ENCODE measurements at regions of chr5 and their contacts with region 1.

Region 1: GRCh38 chr5:131747180-131748105 is 49.4 kb downstream of the FNIP1 start:
- DNase-seq: no peak
- H3K4me3 Mint-ChIP-seq: peak overlapping the region; percentile 49
- H3K27ac Mint-ChIP-seq: peak overlapping the region; percentile 85
- H3K4me1 Mint-ChIP-seq: peaks cover 37% of the 10 kb centered on the region
- H3K27me3 Mint-ChIP-seq: no peaks in the 10 kb centered on the region

Region 2: GRCh38 chr5:131170540-131171275 is 576.7 kb before region 1 on chr5 and contains the start of gene LYRM7:
- CTCF ChIA-PET with region 1: no interaction called
- intact Hi-C with region 1: loop called (anchors 5 kb)
- DNase-seq: peak; percentile 98
- H3K4me3 Mint-ChIP-seq: peak within 1 kb of the TSS; percentile 99
- H3K27ac Mint-ChIP-seq: peak within 1 kb of the TSS; percentile 92
- H3K4me1 Mint-ChIP-seq: peaks cover 44% of the 10 kb centered on the region
- H3K27me3 Mint-ChIP-seq: no peaks in the 10 kb centered on the region
- total RNA-seq, gene LYRM7: 14.6 to 15.0 TPM

Region 3: GRCh38 chr5:131640043-131640856 is 107.2 kb before region 1 on chr5:
- CTCF ChIA-PET with region 1: no interaction called
- intact Hi-C with region 1: loop called (anchors 1 kb)
- DNase-seq: peak; percentile 90
- H3K4me3 Mint-ChIP-seq: peak overlapping the region; percentile 59
- H3K27ac Mint-ChIP-seq: peak overlapping the region; percentile 94
- H3K4me1 Mint-ChIP-seq: peaks cover 29% of the 10 kb centered on the region
- H3K27me3 Mint-ChIP-seq: no peaks in the 10 kb centered on the region

Region 4: GRCh38 chr5:131671994-131672655 is 75.3 kb before region 1 on chr5:
- CTCF ChIA-PET with region 1: no interaction called
- intact Hi-C with region 1: loop called (anchors 5 kb)
- DNase-seq: no peak
- H3K4me3 Mint-ChIP-seq: no peak overlapping the region
- H3K27ac Mint-ChIP-seq: no peak overlapping the region
- H3K4me1 Mint-ChIP-seq: peaks cover 23% of the 10 kb centered on the region
- H3K27me3 Mint-ChIP-seq: no peaks in the 10 kb centered on the region

Region 5: GRCh38 chr5:131854134-131854533 is 106.7 kb after region 1 on chr5:
- CTCF ChIA-PET with region 1: no interaction called
- intact Hi-C with region 1: loop called (anchors 2 kb)
- DNase-seq: peak; percentile 37
- H3K4me3 Mint-ChIP-seq: no peak overlapping the region
- H3K27ac Mint-ChIP-seq: no peak overlapping the region
- H3K4me1 Mint-ChIP-seq: peaks cover 10% of the 10 kb centered on the region
- H3K27me3 Mint-ChIP-seq: no peaks in the 10 kb centered on the region

Region 6: DNA sequence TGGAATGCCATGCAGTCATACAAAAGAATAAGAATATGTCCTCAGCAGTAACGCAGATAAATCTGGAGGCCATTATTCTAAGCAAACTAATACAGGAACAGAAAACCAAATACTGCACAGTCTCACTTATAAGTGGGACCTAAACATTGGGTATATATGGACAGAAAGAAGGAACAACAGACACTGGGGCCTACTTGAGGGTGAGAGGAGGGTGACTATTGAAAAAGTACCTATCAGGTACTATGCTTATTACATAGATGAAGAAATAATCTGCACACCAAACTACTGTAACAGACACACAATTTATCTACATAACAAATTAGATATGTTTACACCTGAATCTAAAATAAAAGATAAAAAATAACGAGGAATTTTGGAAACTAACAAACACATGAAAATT is 159.2 kb after region 1 on chr5:
- CTCF ChIA-PET with region 1: no interaction called
- intact Hi-C with region 1: loop called (anchors 1 kb)
- DNase-seq: no peak
- H3K4me3 Mint-ChIP-seq: no peak overlapping the region
- H3K27ac Mint-ChIP-seq: peak overlapping the region; percentile 51
- H3K4me1 Mint-ChIP-seq: peaks cover 26% of the 10 kb centered on the region
- H3K27me3 Mint-ChIP-seq: no peaks in the 10 kb centered on the region

Region 7: DNA sequence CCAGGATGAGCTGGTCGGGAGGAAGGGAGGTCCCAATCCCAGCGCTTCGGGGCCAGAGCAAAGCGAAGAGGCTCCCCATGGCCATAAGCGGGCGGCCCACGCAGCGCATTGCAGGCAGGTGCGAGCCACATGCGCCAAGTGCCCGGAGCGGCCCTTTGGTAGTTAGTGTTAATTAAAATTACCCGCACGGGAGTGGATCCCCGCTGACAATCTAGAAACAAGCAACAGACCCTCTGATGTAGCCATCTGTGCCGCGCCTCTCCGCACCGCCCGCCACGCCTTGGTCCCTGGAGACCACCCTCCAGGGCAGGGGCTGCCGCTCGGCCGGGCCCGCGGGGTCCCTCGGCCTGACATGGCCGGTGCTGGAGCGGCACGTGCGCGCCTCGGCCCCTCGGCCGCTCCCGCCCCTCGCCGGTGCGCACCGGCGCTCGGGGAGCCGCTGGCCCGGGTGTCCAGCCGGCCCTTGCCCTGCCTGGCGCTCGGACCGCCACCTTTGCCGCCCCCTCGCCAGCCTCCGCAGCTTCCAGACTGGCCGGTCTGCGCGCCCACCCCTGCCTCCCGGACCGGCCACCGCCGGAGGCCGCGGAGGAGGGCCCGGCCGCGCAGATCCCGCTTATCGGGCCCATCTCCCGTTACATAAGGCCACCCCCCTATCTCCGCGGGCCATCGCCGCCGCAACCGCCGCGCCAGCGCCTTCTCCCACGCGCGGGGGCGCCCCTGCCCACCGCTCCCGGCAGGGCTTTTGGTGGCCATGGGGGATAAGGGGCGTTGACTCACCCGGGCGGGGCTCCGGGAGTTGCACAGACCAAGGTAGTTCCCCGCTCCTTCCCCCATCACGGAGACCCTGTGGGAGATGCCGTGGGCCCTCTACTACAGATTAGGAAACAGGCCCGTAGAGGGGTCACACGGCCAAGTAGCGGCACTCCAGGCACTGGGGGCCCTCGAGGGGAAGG is 908.7 kb after region 1 on chr5:
- CTCF ChIA-PET with region 1: no interaction called
- intact Hi-C with region 1: no loop called
- DNase-seq: peak; percentile 40
- H3K4me3 Mint-ChIP-seq: no peak overlapping the region
- H3K27ac Mint-ChIP-seq: no peak overlapping the region
- H3K4me1 Mint-ChIP-seq: peaks cover 7% of the 10 kb centered on the region
- H3K27me3 Mint-ChIP-seq: peaks cover 32% of the 10 kb centered on the region